HEK293 (cell line): ENCODE measurements at regions of chr9 and their contacts with region 1.

Region 1: DNA sequence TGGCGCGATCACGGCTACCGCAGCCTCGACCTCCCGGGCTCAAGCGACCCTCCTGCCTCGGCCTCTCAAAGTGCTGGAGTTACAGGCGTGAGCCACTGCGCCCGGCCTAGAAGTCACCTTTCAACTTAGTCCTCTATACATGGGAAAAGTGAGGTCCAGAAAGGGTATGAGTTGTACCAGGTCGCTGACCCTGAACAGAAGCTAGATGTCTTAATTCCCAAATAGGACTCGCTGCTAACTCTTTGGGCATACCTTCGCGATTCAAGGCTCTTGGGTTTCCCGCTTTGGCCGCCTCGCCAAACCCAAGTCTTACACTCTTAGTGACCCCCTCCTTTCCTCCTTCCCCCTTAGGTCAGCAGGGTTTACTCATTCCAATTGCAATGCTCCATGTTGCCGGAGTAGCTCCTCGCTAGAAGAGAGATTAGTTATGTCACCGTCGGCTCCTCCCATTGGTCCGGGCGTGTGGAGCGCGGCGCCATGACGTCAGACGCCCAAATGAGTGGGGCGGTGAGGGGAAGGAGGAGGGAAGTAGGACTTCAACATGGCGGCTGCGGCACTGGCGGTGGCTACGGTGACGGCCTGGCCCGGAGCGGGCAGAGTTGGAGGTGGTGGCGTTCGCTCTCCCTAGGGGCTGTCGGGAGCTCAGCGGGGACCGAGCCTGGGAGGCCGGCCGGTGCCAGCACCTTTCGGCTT is at the start of gene UBAP1:
- H3K4me3 ChIP-seq: peak within 1 kb of the TSS; percentile 85
- H3K27ac ChIP-seq: peak within 1 kb of the TSS; percentile 90
- H3K4me1 ChIP-seq: no peaks in the 10 kb centered on the region
- CTCF ChIP-seq: no peak

Region 2: GRCh38 chr9:34048923-34049697 is 129.6 kb before region 1 on chr9:
- CTCF ChIA-PET with region 1: no interaction called
- POLR2A ChIA-PET with region 1: interaction called, 10 read pairs
- H3K4me3 ChIP-seq: peak overlapping the region; percentile 87
- H3K27ac ChIP-seq: peak overlapping the region; percentile 88
- H3K4me1 ChIP-seq: 0 out of 2 replicates have a peak, but pooled peaks cover 2% of the 10 kb centered on the region
- CTCF ChIP-seq: peak; percentile 34

Region 3: GRCh38 chr9:34106110-34106509 is 72.6 kb before region 1 on chr9:
- CTCF ChIA-PET with region 1: no interaction called
- POLR2A ChIA-PET with region 1: interaction called, 10 read pairs
- H3K4me3 ChIP-seq: no peak overlapping the region
- H3K27ac ChIP-seq: no peak overlapping the region
- H3K4me1 ChIP-seq: no peaks in the 10 kb centered on the region
- CTCF ChIP-seq: no peak

Region 4: GRCh38 chr9:34190996-34191892 is 12.6 kb after region 1 on chr9:
- CTCF ChIA-PET with region 1: interaction called, 8 read pairs
- POLR2A ChIA-PET with region 1: interaction called, 11 read pairs
- H3K4me3 ChIP-seq: no peak overlapping the region
- H3K27ac ChIP-seq: peak overlapping the region; percentile 38; the same call in 1 of the 2 replicates
- H3K4me1 ChIP-seq: peaks cover 18% of the 10 kb centered on the region
- CTCF ChIP-seq: 0 out of 2 replicates have a peak, but pooled peaks have one; percentile 11

Region 5: GRCh38 chr9:34206561-34206960 is 27.9 kb after region 1 on chr9:
- CTCF ChIA-PET with region 1: no interaction called
- POLR2A ChIA-PET with region 1: interaction called, 11 read pairs
- H3K4me3 ChIP-seq: no peak overlapping the region
- H3K27ac ChIP-seq: no peak overlapping the region
- H3K4me1 ChIP-seq: peaks cover 2% of the 10 kb centered on the region; the same call in 1 of the 2 replicates
- CTCF ChIP-seq: no peak

Region 6: GRCh38 chr9:34246453-34246852 is 67.8 kb after region 1 on chr9:
- CTCF ChIA-PET with region 1: interaction called, 10 read pairs
- POLR2A ChIA-PET with region 1: no interaction called
- H3K4me3 ChIP-seq: no peak overlapping the region
- H3K27ac ChIP-seq: no peak overlapping the region
- H3K4me1 ChIP-seq: no peaks in the 10 kb centered on the region
- CTCF ChIP-seq: peak; percentile 27; the same call in 1 of the 2 replicates